Activated B cell treated with CpG ODN at 0.5 μM for 24 hours (primary cell): ENCODE measurements at regions of chr17 and their contacts with region 1.

Region 1: DNA sequence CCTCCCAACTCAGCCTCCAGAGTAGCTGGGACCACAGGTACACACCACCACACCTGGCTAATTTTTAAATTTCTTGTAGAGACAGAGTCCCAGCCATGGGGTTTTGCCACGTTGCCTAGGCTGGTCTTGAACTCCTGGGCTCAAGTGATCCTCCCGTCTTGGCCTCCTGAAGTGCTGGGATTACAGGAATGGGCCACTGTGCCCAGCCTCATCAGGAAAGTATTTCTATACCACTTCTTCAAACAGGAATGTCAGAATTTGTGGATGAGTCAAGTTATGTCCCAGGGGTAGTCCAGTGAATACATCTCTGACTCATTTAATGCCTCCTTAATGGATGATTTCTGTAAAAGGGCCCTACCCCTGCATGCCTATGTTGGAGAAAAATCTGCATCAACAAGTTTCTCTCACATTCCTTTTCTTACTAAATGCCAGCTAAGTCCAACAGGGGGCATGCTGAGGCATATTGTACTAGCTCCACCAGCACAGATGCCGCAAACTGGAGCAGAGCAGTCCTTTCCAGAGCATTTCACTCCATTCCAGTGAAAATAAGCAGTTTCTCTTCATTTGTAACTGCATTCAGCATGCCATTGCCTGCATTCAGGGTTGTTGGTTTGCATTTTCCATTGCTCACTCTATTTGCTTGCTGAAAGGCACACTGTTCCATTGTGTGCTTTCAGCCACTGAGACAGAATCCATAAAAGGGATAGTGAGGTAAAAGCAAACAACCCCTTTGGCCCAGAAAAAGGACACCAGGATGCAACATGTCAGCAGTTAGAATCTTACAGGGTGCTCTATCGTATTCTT is 5.3 kb upstream of the CAVIN1 start:
- DNase-seq: no peak
- ATAC-seq: peak; percentile 81
- H3K4me3 Mint-ChIP-seq: no peak overlapping the region
- H3K27ac Mint-ChIP-seq: no peak overlapping the region
- H3K4me1 Mint-ChIP-seq: peaks cover 6% of the 10 kb centered on the region
- H3K27me3 Mint-ChIP-seq: peaks cover 20% of the 10 kb centered on the region
- CTCF ChIP-seq: no peak

Region 2: GRCh38 chr17:42378597-42379594 is 49.4 kb before region 1 on chr17:
- CTCF ChIA-PET with region 1: no interaction called
- POLR2A ChIA-PET with region 1: no interaction called
- intact Hi-C with region 1: no loop called
- DNase-seq: no peak
- ATAC-seq: peak; percentile 78
- H3K4me3 Mint-ChIP-seq: peak overlapping the region; percentile 84
- H3K27ac Mint-ChIP-seq: peak overlapping the region; percentile 93
- H3K4me1 Mint-ChIP-seq: peaks cover 64% of the 10 kb centered on the region
- H3K27me3 Mint-ChIP-seq: no peaks in the 10 kb centered on the region
- CTCF ChIP-seq: no peak

Region 3: GRCh38 chr17:42438600-42439567 is 10.5 kb after region 1 on chr17:
- CTCF ChIA-PET with region 1: interaction called, 14 read pairs
- POLR2A ChIA-PET with region 1: no interaction called
- intact Hi-C with region 1: no loop called
- DNase-seq: no peak
- ATAC-seq: peak; percentile 67
- H3K4me3 Mint-ChIP-seq: no peak overlapping the region
- H3K27ac Mint-ChIP-seq: no peak overlapping the region
- H3K4me1 Mint-ChIP-seq: peaks cover 17% of the 10 kb centered on the region
- H3K27me3 Mint-ChIP-seq: no peaks in the 10 kb centered on the region
- CTCF ChIP-seq: no peak

Region 4: GRCh38 chr17:42459256-42459800 is 31.0 kb after region 1 on chr17:
- CTCF ChIA-PET with region 1: interaction called, 13 read pairs
- POLR2A ChIA-PET with region 1: interaction called, 14 read pairs
- intact Hi-C with region 1: loop called (anchors 2 kb)
- DNase-seq: no peak
- ATAC-seq: no peak
- H3K4me3 Mint-ChIP-seq: peak overlapping the region; percentile 98
- H3K27ac Mint-ChIP-seq: peak overlapping the region; percentile 95
- H3K4me1 Mint-ChIP-seq: peaks cover 66% of the 10 kb centered on the region
- H3K27me3 Mint-ChIP-seq: no peaks in the 10 kb centered on the region
- CTCF ChIP-seq: no peak

Region 5: DNA sequence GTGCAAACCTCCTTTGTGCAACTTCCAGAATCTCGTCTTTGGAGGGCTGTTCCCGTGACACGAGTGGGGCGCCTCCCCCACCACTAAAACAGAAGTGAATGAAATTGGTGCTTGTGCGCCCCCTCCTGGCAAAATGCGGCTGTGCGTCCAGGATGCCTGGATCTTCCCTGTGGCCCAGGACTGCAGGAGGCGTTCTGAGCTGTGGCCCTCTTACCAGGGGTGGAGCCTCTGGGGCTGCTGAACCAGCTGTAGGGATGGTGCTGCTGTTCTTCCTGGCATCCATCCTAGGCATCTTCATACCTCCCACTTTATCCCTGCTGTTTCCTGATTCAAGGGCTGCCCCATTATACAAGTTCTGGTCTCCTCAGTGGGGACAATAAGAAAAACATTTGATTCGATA is 89.2 kb after region 1 on chr17:
- CTCF ChIA-PET with region 1: interaction called, 49 read pairs
- POLR2A ChIA-PET with region 1: interaction called, 3 read pairs
- intact Hi-C with region 1: loop called (anchors 1 kb)
- DNase-seq: peak; percentile 75
- ATAC-seq: peak; percentile 92
- H3K4me3 Mint-ChIP-seq: no peak overlapping the region
- H3K27ac Mint-ChIP-seq: no peak overlapping the region
- H3K4me1 Mint-ChIP-seq: peaks cover 7% of the 10 kb centered on the region
- H3K27me3 Mint-ChIP-seq: no peaks in the 10 kb centered on the region
- CTCF ChIP-seq: peak; percentile 64

Region 6: DNA sequence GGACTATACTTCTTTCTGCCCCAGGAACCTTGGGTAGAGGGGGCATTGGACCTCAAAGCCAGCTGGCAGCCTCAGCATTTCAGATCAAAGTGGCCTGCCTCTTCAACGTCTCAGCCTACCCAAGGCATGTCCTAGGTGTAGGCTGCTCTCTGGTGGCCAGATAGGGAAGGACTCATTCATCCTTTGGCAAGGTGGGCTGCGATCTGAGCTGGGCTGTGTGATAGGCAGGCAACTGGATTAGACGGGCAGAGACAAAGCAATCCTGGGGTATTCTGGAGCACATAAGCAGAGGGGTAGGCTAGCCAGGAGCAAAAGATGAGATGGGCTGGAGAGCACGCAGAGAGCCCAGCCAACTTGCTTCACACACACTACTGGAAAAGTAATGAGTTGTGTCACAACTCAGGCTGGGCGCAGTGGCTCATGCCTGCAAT is 98.9 kb after region 1 on chr17:
- CTCF ChIA-PET with region 1: interaction called, 10 read pairs
- POLR2A ChIA-PET with region 1: interaction called, 12 read pairs
- intact Hi-C with region 1: loop called (anchors 1 kb)
- DNase-seq: peak; percentile 42
- ATAC-seq: peak; percentile 76
- H3K4me3 Mint-ChIP-seq: no peak overlapping the region
- H3K27ac Mint-ChIP-seq: no peak overlapping the region
- H3K4me1 Mint-ChIP-seq: peaks cover 31% of the 10 kb centered on the region
- H3K27me3 Mint-ChIP-seq: no peaks in the 10 kb centered on the region
- CTCF ChIP-seq: peak; percentile 38